ENCODE measurements at regions of chr16 and their contacts with region 1.

Region 1: DNA sequence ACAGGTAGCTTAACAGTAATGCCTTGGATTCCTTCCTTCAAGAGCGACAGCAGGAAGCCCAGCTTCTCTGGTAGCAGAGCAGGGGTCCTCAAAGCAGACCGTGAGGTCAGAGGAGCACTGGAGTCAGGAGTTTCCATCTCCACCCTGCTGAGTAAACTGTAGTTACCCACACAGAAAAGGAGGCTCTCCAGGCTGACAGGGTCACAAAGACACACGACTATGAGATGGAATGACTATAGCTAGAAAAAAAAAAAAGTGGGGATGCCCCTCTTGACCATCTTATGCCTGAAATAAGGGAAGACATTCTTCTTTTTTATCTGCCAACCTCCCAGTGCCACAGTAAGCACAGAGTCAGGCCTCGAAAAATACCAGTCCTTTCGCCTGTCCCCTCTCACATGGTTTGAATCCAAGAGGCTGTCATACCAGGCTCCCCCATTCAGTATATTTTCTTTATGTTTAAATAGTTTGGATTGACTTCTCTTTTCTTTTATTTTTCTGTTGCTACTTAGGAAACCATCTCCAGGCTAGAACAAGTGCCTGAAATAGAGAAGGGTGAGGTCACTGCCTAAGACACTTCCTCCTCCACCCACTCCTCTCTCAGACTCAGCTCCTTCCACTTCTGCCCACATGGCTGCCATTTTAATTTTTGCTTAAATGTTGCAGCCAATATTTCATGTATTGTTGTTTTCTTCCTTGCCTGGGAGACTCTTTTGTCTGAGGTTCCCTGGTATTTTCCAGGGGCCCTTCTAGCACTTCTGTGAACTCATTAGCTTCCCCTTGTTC is 707.4 kb downstream of the MAF start:
- DNase-seq: peak; percentile 65
- H3K4me3 Mint-ChIP-seq: peak overlapping the region; percentile 20
- H3K27ac Mint-ChIP-seq: peak overlapping the region; percentile 96
- H3K4me1 Mint-ChIP-seq: peaks cover 86% of the 10 kb centered on the region
- H3K27me3 Mint-ChIP-seq: no peaks in the 10 kb centered on the region

Region 2: GRCh38 chr16:78755751-78756661 is 137.1 kb before region 1 on chr16:
- CTCF ChIA-PET with region 1: no interaction called
- POLR2A ChIA-PET with region 1: no interaction called
- intact Hi-C with region 1: no loop called
- DNase-seq: no peak
- H3K4me3 Mint-ChIP-seq: no peak overlapping the region
- H3K27ac Mint-ChIP-seq: no peak overlapping the region
- H3K4me1 Mint-ChIP-seq: no peaks in the 10 kb centered on the region
- H3K27me3 Mint-ChIP-seq: no peaks in the 10 kb centered on the region

Region 3: DNA sequence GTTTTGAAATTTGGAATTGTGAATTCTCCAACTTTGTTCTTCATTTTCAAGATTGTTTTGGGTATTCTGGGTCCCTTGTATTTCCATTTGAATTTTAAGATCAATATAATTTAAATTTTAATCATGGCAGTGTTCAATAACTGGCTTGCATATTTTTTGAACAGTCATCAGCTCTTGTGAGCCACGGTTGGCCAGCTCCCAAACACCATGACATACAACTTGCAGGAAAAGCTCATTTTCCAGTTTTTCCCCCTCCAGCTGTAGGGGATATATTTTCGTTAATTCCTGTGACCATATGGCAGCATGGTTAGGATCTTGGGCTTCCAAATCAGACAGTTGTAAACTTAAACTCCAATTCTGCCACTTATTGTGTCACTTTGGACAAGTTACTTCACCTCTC is 103.6 kb before region 1 on chr16:
- CTCF ChIA-PET with region 1: interaction called, 3 read pairs
- POLR2A ChIA-PET with region 1: interaction called, 11 read pairs
- intact Hi-C with region 1: loop called (anchors 1 kb)
- DNase-seq: no peak
- H3K4me3 Mint-ChIP-seq: no peak overlapping the region
- H3K27ac Mint-ChIP-seq: peak overlapping the region; percentile 99
- H3K4me1 Mint-ChIP-seq: peaks cover 73% of the 10 kb centered on the region
- H3K27me3 Mint-ChIP-seq: no peaks in the 10 kb centered on the region

Region 4: GRCh38 chr16:78794581-78795250 is 98.4 kb before region 1 on chr16:
- CTCF ChIA-PET with region 1: interaction called, 3 read pairs
- POLR2A ChIA-PET with region 1: interaction called, 11 read pairs
- intact Hi-C with region 1: loop called (anchors 1 kb)
- DNase-seq: peak; percentile 58
- H3K4me3 Mint-ChIP-seq: no peak overlapping the region
- H3K27ac Mint-ChIP-seq: peak overlapping the region; percentile 87
- H3K4me1 Mint-ChIP-seq: peaks cover 55% of the 10 kb centered on the region
- H3K27me3 Mint-ChIP-seq: no peaks in the 10 kb centered on the region

Region 5: GRCh38 chr16:78836802-78837491 is 56.2 kb before region 1 on chr16:
- CTCF ChIA-PET with region 1: no interaction called
- POLR2A ChIA-PET with region 1: interaction called, 4 read pairs
- intact Hi-C with region 1: loop called (anchors 1 kb)
- DNase-seq: peak; percentile 31
- H3K4me3 Mint-ChIP-seq: peak overlapping the region; percentile 51
- H3K27ac Mint-ChIP-seq: peak overlapping the region; percentile 93
- H3K4me1 Mint-ChIP-seq: peaks cover 37% of the 10 kb centered on the region
- H3K27me3 Mint-ChIP-seq: no peaks in the 10 kb centered on the region

Region 6: DNA sequence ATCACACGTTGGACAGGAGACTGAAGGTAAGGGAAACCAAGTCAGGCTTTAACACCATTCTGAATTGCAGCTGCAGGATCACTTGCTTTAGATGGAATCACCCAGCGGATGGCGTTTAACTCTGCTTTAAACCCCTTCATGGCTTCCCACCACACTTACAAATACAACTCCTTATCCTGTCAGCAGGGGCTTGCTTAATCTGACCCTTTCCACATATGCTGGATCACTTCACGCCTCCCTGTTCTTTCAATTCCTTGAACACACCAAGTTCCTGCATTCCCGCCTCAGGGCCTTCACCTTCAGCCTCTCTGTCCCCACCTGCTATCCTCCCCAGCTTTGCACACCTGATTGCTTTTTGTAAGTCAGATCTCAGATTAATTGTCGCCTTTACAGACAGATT is 265.2 kb after region 1 on chr16:
- CTCF ChIA-PET with region 1: no interaction called
- POLR2A ChIA-PET with region 1: no interaction called
- intact Hi-C with region 1: loop called (anchors 5 kb)
- DNase-seq: no peak
- H3K4me3 Mint-ChIP-seq: no peak overlapping the region
- H3K27ac Mint-ChIP-seq: no peak overlapping the region
- H3K4me1 Mint-ChIP-seq: peaks cover 35% of the 10 kb centered on the region
- H3K27me3 Mint-ChIP-seq: no peaks in the 10 kb centered on the region

Measured in activated CD4-positive, alpha-beta memory T cell treated with anti-CD3 and anti-CD28 coated beads for 36 hours (primary cell).